ENCODE measurements at regions of chr10 and their contacts with region 1.

Region 1: DNA sequence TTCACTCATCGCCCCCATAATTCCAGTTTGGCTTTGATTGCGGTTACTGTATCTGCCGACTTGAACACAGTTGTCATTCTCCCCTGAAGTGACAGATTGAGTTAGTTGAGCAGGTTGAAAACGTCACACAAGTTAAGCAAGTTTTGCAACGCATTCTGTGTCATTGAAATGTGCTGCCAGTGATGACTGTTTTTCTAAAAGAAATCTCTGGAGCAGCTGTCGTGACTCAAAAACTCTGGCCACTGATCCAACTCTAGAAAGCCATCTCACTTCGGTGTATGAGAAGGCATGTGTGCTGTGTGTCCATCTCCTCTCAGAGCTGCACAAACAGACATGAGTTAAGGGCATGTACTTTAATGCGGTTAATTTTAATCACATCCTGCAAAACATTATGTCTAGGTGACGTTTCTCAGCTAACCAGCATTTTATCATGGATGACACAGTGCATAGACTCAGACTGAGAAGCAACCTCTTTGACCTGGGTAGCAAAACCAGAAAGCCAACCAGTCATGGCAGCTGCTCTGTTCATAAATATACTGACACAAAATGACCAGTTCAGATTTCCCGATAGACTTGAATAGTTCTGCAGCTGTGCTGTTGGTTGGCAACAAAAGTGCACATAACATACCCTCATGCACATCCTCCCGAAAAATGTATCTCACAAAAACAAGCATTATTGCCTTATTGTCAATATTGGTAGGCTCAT is 69.3 kb downstream of the CSTF2T start:
- DNase-seq: no peak
- ATAC-seq: peak; percentile 90

Region 2: GRCh38 chr10:51425431-51425830 is 204.7 kb before region 1 on chr10:
- intact Hi-C with region 1: no loop called
- DNase-seq: no peak
- ATAC-seq: peak; percentile 36

Region 3: GRCh38 chr10:51524041-51524440 is 106.0 kb before region 1 on chr10:
- intact Hi-C with region 1: no loop called
- DNase-seq: no peak
- ATAC-seq: no peak

Region 4: GRCh38 chr10:51574248-51575048 is 55.6 kb before region 1 on chr10:
- intact Hi-C with region 1: loop called (anchors 10 kb)
- DNase-seq: no peak
- ATAC-seq: no peak

Region 5: DNA sequence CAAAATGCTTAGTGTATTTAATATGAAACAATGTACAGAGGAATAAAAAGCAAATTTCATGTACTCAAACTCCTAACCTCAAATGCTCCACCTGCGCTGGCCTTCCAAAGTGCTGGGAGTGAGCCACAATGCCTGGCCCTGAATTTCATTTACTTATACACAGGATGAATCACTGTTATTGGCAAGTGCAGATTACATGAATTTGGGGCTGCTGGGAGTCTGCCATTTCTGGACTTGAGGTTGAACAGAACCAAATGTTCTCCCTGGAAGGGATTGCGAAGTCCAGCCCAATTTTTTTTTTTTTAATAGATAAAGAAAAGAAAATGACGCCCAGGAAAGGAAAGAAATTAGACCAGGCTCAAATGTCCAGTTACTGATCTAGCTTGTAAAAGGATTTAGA is 76.1 kb after region 1 on chr10:
- intact Hi-C with region 1: no loop called
- DNase-seq: peak; percentile 71
- ATAC-seq: peak; percentile 89

Measured in left ventricle myocardium superior (tissue), 1 donor.